Activated CD4-positive, alpha-beta T cell treated with anti-CD3 and anti-CD28 coated beads, Interleukin-2, amount 10 ng/mL, durations not matched to agents 24 days and 14 days (primary cell): ENCODE measurements at regions of chr11 and their contacts with region 1.

Region 1: DNA sequence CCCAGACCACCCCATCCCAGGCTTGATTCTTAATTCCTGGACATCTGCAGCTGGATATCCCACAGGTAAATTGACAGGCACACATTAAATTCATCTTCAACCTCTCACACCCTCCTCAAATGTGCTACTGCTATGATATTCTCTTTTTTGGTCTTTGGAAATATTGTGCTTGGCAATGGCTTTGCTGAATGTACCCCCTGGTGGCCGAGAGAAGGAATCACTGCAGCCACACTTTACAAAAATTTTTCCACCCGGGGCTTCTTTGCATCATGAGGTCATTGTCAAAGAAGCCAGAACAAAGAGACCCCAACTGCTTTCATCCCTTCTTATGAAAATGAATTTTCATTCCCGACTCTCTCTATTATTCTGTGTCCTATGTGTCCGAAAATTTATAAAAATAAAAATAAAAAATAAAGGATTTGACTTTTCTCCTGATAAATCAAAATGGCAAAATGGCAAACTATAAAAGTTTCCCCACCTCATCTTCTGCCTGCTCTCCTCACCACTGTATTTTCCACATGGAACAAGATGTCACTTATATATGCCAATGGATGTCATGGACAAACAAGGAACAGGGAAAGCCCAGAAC is 15.0 kb upstream of the CYB5R2 start:
- DNase-seq: peak; percentile 68
- H3K4me3 Mint-ChIP-seq: no peak overlapping the region
- H3K27ac Mint-ChIP-seq: no peak overlapping the region
- H3K4me1 Mint-ChIP-seq: no peaks in the 10 kb centered on the region
- H3K27me3 Mint-ChIP-seq: peaks cover 24% of the 10 kb centered on the region

Region 2: GRCh38 chr11:6812390-6813005 is 875.8 kb before region 1 on chr11:
- intact Hi-C with region 1: loop called (anchors 10 kb)
- DNase-seq: peak; percentile 83
- H3K4me3 Mint-ChIP-seq: no peak overlapping the region
- H3K27ac Mint-ChIP-seq: no peak overlapping the region
- H3K4me1 Mint-ChIP-seq: no peaks in the 10 kb centered on the region
- H3K27me3 Mint-ChIP-seq: peaks cover 25% of the 10 kb centered on the region

Region 3: GRCh38 chr11:7098235-7098832 is 590.0 kb before region 1 on chr11:
- intact Hi-C with region 1: loop called (anchors 2 kb)
- DNase-seq: peak; percentile 70
- H3K4me3 Mint-ChIP-seq: no peak overlapping the region
- H3K27ac Mint-ChIP-seq: no peak overlapping the region
- H3K4me1 Mint-ChIP-seq: no peaks in the 10 kb centered on the region
- H3K27me3 Mint-ChIP-seq: peaks cover 8% of the 10 kb centered on the region

Region 4: DNA sequence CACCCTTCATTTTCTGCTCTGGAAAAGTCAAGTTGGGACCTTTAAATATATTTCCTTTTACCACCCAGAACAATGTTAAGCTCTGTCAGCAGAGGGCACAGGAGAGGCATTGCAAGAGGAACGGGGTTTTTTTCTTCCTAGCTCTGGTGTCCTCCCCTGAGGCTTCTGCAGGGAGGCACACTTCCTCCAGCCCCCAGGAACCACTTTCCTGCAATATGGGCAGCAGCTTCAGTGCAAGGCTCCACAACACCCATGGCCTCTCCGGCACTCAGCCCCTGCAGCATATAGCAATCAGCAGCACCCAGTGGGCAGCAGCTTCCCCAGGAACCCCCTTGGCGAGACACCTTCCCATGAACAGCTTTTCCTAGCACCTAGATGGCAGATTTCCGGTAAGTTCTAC is 335.2 kb before region 1 on chr11:
- intact Hi-C with region 1: loop called (anchors 10 kb)
- DNase-seq: peak; percentile 70
- H3K4me3 Mint-ChIP-seq: no peak overlapping the region
- H3K27ac Mint-ChIP-seq: no peak overlapping the region
- H3K4me1 Mint-ChIP-seq: no peaks in the 10 kb centered on the region
- H3K27me3 Mint-ChIP-seq: peaks cover 1% of the 10 kb centered on the region

Region 5: DNA sequence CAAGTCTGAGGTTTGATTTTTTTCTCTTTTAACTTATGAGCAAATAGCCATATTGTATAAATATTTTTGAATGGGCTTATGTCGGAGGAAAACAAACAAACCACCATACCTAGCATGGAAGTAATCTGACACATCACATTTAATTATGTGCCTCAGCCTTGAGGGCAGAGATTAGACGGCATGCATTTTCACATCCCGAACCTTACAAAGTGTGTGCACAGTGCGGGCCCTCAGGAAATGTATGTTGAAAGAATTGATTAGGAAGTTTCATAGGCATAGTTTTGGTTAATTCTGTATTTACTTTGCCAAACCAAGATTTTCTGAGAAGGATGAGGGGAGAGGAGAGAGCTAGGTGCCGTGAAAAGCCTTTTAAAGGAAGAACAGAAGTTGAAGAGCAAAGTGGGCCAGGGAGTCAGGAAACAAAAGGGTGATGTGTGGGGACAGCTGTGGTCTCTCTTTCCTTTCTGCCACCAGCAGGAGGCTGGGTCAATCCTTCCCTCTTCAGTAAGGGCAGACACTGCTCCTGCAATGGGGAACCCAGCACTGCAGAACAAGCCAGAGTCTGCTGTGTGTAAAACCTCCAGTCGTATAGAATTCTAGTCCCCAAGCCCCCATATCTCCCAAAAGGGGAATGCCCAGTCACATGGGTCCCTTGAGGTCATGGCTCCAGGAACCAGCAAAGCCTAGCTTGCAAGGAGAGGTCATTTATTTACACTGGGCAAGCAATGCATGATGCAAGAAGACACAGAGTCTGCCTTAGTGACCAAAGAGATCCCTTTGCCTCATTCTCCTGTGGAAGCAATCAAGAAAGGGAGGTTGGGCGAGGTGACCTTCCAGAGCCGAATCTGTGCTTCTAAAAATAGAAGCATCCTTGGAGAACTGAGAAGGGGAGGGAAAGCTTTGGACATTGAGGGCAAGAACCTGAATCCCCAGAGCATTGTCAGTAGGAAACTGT is 274.1 kb before region 1 on chr11:
- intact Hi-C with region 1: no loop called
- DNase-seq: no peak
- H3K4me3 Mint-ChIP-seq: no peak overlapping the region
- H3K27ac Mint-ChIP-seq: no peak overlapping the region
- H3K4me1 Mint-ChIP-seq: no peaks in the 10 kb centered on the region
- H3K27me3 Mint-ChIP-seq: peaks cover 9% of the 10 kb centered on the region

Region 6: DNA sequence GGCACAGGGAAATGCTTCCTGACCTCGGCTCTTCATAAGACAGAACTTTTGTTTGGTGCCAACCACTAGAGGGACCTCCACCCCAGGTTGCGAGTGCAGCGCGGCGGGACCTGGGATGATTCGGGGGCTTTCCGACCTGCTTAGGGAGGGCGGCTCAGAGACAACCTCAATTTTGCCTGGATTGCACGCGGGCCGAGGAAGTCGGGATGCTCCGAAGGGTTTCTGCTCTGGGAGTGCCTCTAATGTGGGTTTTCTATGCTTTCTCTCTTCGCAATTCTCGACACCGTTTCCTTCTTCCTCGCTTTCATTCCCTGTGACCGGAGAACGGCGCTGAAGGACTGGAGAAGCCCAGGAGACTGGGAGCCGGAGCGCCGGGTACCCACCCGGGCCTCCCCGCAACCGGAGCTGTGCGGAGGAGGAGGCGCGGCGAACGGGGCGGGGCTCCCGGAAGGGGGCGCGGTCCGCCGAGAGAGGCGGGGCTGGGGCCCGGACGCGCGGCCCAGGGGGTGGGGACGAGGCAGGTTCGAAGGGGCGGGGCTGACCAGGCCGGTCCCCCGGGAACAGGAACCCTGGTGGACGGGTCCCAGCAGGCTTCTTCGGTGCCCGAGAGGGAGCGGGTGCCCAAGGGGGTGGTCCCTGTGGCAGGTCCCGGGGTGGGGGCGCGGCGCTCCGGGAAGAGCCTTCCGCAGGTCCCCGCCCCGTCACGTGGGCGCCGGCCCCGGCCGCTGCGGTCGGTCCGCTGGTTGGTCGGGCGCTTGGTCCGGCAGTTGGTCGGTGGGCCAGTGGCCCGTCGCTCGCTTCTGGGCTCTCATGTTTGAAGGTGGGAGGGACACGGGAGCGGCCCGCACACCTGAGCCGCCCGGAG is 174.9 kb before region 1 on chr11 and contains the start of gene PPFIBP2:
- intact Hi-C with region 1: loop called (anchors 2 kb)
- DNase-seq: peak; percentile 97
- H3K4me3 Mint-ChIP-seq: peak within 1 kb of the TSS; percentile 90
- H3K27ac Mint-ChIP-seq: peak within 1 kb of the TSS; percentile 84
- H3K4me1 Mint-ChIP-seq: peaks cover 12% of the 10 kb centered on the region
- H3K27me3 Mint-ChIP-seq: peaks cover 30% of the 10 kb centered on the region
- total RNA-seq, gene PPFIBP2: 1.2 and 1.6 TPM in 2 replicates

Region 7: DNA sequence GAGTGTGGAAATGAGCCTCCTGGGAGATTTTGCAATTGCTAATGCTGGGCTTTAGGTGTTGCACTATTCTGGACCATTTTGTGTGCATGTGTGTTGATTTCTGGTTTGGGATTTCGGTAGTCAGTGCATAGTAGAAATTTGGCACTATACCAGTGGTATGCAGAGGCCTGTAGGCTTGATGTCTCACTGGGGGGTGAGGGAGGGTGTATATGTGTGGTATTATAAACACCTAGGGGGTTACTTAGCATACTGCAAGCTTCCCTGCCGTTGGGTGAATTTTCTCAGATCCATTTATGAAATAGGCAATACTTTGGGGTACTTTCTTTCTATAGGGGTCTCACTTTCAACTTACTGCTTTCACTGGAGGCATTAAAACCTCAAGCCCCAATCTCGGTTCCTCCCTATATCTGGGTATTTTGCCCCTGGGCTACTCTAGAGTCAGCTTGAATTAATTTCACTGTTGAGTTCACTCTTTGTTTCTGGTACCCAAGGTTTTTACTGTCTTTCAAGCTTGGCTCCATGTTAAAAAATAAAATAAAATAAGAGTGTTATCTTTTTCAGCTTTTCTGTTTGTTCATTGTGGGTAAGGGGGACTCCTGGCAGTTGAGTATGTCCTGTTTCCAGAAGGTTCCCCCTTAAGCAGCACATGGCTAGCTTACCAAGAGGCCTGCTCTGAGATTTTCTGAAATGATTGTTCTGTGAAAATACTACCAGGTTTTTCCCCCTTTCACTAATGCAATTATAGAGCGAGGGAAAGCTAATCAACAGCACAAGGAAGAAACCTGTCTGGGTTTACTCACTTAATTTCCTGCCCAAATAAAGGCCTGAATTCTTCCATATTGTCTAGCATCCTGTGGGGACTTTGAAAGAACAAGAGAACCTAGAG is 128.7 kb before region 1 on chr11:
- intact Hi-C with region 1: no loop called
- DNase-seq: no peak
- H3K4me3 Mint-ChIP-seq: no peak overlapping the region
- H3K27ac Mint-ChIP-seq: no peak overlapping the region
- H3K4me1 Mint-ChIP-seq: no peaks in the 10 kb centered on the region
- H3K27me3 Mint-ChIP-seq: peaks cover 5% of the 10 kb centered on the region

Region 8: DNA sequence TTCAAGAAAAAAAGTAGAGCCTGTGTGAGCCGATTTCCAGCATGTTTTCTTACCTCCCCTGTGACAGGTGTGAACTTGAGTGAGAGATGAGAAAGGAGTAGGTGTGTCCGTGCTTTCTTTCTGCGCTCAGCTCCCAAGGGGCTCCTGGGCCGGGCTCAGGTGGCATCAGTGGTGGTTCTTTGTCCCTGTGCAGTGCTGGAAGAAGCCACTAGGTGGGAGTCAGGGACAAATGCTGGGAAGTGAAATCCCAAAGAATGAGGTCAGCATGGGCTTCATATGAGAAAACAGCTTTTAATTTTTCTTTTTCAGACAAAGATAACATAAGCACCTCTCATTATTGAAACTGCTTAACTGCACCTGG is 116.7 kb before region 1 on chr11:
- intact Hi-C with region 1: loop called (anchors 5 kb)
- DNase-seq: peak; percentile 62
- H3K4me3 Mint-ChIP-seq: no peak overlapping the region
- H3K27ac Mint-ChIP-seq: no peak overlapping the region
- H3K4me1 Mint-ChIP-seq: peaks cover 6% of the 10 kb centered on the region
- H3K27me3 Mint-ChIP-seq: peaks cover 45% of the 10 kb centered on the region